HCT116 (cell line): ENCODE measurements at regions of chr9 and their contacts with region 1.

Region 1: GRCh38 chr9:111743275-111743674 is 51.5 kb downstream of the SHOC1 start:
- DNase-seq: peak; percentile 87
- ATAC-seq: peak; percentile 97
- H3K4me3 ChIP-seq: 0 out of 4 replicates have a peak overlapping the region, but pooled peaks of 1 of the 2 experiments have one; percentile 2
- H3K27ac ChIP-seq: no peak overlapping the region; the same call in 1 of the 2 replicates
- H3K4me1 ChIP-seq: peaks cover 10 to 25% of the 10 kb centered on the region in 2 experiments
- H3K27me3 ChIP-seq: no peaks in the 10 kb centered on the region
- CTCF ChIP-seq: no peak
- POLR2A ChIP-seq: no peak
- RAD21 ChIP-seq: peak; percentile 25; the same call in 1 of the 2 replicates

Region 2: GRCh38 chr9:111728621-111729366 is 14.5 kb before region 1 on chr9:
- CTCF ChIA-PET with region 1: no interaction called
- POLR2A ChIA-PET with region 1: interaction called, 3 read pairs
- RAD21 ChIA-PET with region 1: no interaction called
- intact Hi-C with region 1: loop called (anchors 2 kb)
- DNase-seq: peak; percentile 87
- ATAC-seq: peak; percentile 85
- H3K4me3 ChIP-seq: peak overlapping the region in 1 of 2 experiments; percentile 19; a peak in 1 of 4 replicates
- H3K27ac ChIP-seq: peak overlapping the region; percentile 75
- H3K4me1 ChIP-seq: peaks cover 42 to 54% of the 10 kb centered on the region in 2 experiments
- H3K27me3 ChIP-seq: no peaks in the 10 kb centered on the region
- CTCF ChIP-seq: no peak
- POLR2A ChIP-seq: no peak
- RAD21 ChIP-seq: no peak